B cell (primary cell): ENCODE measurements at regions of chr2 and their contacts with region 1.

Region 1: GRCh38 chr2:112626604-112627059 is 19.1 kb upstream of the SLC20A1 start:
- DNase-seq: peak; percentile 82
- ATAC-seq: peak; percentile 79
- H3K4me3 ChIP-seq: peak overlapping the region in 3 of 5 experiments; percentile 39 to 59 (median 46)
- H3K4me3 Mint-ChIP-seq: peak overlapping the region; percentile 56
- H3K27ac ChIP-seq: no peak overlapping the region
- H3K27ac Mint-ChIP-seq: no peak overlapping the region
- H3K4me1 ChIP-seq: peaks cover 15 to 39% of the 10 kb centered on the region in 2 donors
- H3K4me1 Mint-ChIP-seq: peaks cover 23% of the 10 kb centered on the region
- H3K27me3 ChIP-seq: no peaks in the 10 kb centered on the region
- H3K27me3 Mint-ChIP-seq: no peaks in the 10 kb centered on the region
- CTCF ChIP-seq: peak; percentile 89

Region 2: GRCh38 chr2:112601751-112602150 is 24.9 kb before region 1 on chr2:
- CTCF ChIA-PET with region 1: interaction called, 58 read pairs
- POLR2A ChIA-PET with region 1: interaction called, 10 read pairs
- intact Hi-C with region 1: loop called (anchors 1 kb)
- DNase-seq: no peak
- ATAC-seq: no peak
- H3K4me3 ChIP-seq: no peak overlapping the region
- H3K4me3 Mint-ChIP-seq: no peak overlapping the region
- H3K27ac ChIP-seq: no peak overlapping the region
- H3K27ac Mint-ChIP-seq: no peak overlapping the region
- H3K4me1 ChIP-seq: peaks cover 0 to 5% of the 10 kb centered on the region in 2 donors
- H3K4me1 Mint-ChIP-seq: peaks cover 5% of the 10 kb centered on the region
- H3K27me3 ChIP-seq: no peaks in the 10 kb centered on the region
- H3K27me3 Mint-ChIP-seq: no peaks in the 10 kb centered on the region
- CTCF ChIP-seq: no peak

Region 3: DNA sequence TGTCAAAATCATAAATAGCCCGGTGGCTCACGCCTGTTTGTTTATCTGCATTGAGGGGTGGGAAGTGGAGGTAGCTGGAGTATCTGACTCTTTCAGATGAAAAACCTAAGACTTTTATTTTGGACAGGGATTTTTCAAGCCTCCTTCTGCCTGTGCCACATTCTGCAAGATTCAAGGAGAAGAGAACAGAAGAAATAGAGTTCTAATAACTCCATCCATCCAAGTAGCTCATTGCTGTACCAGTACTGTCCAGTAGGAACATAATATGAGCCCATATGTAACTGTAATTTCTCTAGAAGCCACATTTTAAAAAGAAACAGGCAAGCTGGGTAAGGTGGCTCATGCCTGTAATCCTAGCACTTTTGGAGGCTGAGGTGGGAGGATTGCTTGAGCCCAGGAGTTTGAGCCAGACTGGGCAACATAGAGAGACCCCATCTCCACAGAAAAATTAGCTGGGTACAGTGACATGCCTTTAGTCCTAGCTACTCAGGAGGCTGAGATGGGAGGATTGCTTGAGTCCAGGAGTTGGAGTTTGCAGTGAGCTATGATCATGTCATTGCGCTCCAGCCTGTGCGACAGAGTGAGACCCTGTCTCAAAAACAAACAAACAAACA is 58.7 kb after region 1 on chr2:
- CTCF ChIA-PET with region 1: interaction called, 114 read pairs
- POLR2A ChIA-PET with region 1: interaction called, 3 read pairs
- intact Hi-C with region 1: no loop called
- DNase-seq: no peak
- ATAC-seq: no peak
- H3K4me3 ChIP-seq: no peak overlapping the region
- H3K4me3 Mint-ChIP-seq: no peak overlapping the region
- H3K27ac ChIP-seq: no peak overlapping the region
- H3K27ac Mint-ChIP-seq: no peak overlapping the region
- H3K4me1 ChIP-seq: peaks cover 5 to 17% of the 10 kb centered on the region in 2 donors
- H3K4me1 Mint-ChIP-seq: peaks cover 13% of the 10 kb centered on the region
- H3K27me3 ChIP-seq: no peaks in the 10 kb centered on the region
- H3K27me3 Mint-ChIP-seq: no peaks in the 10 kb centered on the region
- CTCF ChIP-seq: peak; percentile 25

Region 4: DNA sequence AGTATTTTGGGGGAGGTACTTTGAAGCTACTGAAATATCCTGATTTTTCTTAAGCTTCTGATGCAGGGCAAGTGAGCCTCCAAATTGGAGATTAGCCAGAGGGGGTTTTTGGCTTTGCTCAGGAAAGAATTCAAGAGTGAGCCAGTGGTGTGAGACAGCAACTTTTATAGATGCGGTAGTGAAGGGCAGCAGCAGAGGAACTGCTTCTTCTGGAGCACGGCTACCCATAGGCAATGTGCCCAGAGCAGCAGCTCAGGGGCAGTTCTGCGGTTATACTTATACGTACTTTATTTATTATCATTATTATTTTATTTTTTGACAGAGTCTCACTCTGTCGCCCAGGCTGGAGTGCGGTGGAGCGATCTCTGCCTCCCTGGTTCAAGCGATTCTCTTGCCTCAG is 74.4 kb after region 1 on chr2:
- CTCF ChIA-PET with region 1: interaction called, 7 read pairs
- POLR2A ChIA-PET with region 1: interaction called, 10 read pairs
- intact Hi-C with region 1: no loop called
- DNase-seq: peak; percentile 44
- ATAC-seq: peak; percentile 35
- H3K4me3 ChIP-seq: no peak overlapping the region
- H3K4me3 Mint-ChIP-seq: peak overlapping the region; percentile 21
- H3K27ac ChIP-seq: peak overlapping the region; percentile 62 to 70
- H3K27ac Mint-ChIP-seq: peak overlapping the region; percentile 50
- H3K4me1 ChIP-seq: peaks cover 40 to 48% of the 10 kb centered on the region in 2 donors
- H3K4me1 Mint-ChIP-seq: peaks cover 52% of the 10 kb centered on the region
- H3K27me3 ChIP-seq: no peaks in the 10 kb centered on the region
- H3K27me3 Mint-ChIP-seq: no peaks in the 10 kb centered on the region
- CTCF ChIP-seq: no peak

Region 5: DNA sequence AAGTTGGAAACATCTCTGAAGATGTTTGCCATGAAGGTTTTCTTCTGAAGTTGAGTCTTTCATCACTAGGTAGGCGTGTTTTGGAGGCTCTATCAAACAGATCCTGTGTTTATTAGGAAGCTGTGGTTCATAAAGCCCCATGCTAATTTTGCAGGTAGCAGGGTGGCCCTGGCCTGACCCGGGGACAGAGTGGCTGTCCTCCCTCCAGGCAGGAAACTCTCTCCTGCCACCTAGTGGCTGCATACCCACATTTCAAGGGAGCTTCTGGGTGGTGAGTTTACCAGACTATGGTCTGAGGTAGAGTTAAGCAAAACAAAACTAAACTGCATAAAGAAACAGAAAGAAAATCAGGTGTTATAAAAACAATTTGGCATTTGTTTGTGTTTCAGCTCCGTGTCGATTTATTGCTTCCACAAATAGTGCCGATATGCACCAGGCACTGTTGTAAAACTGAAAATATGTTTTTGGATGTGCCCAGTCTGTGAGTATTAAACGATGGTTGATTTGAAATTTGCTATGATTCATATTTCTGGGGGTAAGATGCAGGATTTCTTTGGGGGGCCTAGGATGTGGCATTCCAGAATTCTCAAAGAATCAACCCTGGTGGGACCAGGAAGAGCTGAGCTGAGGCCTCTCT is 258.4 kb after region 1 on chr2:
- CTCF ChIA-PET with region 1: interaction called, 10 read pairs
- POLR2A ChIA-PET with region 1: no interaction called
- intact Hi-C with region 1: loop called (anchors 10 kb)
- DNase-seq: peak; percentile 65
- ATAC-seq: peak; percentile 75
- H3K4me3 ChIP-seq: no peak overlapping the region
- H3K4me3 Mint-ChIP-seq: no peak overlapping the region
- H3K27ac ChIP-seq: no peak overlapping the region
- H3K27ac Mint-ChIP-seq: no peak overlapping the region
- H3K4me1 ChIP-seq: peaks cover 7 to 15% of the 10 kb centered on the region in 2 donors
- H3K4me1 Mint-ChIP-seq: peaks cover 14% of the 10 kb centered on the region
- H3K27me3 ChIP-seq: no peaks in the 10 kb centered on the region
- H3K27me3 Mint-ChIP-seq: no peaks in the 10 kb centered on the region
- CTCF ChIP-seq: peak; percentile 90